ENCODE measurements at regions of chr12 and their contacts with region 1.

Region 1: GRCh38 chr12:70040141-70040540 is 203.1 kb upstream of the CNOT2 start:
- DNase-seq: no peak
- H3K4me3 ChIP-seq: no peak overlapping the region
- H3K27ac ChIP-seq: peak overlapping the region; percentile 45 to 66
- H3K4me1 ChIP-seq: peaks cover 0 to 7% of the 10 kb centered on the region in 2 donors
- H3K27me3 ChIP-seq: no peaks in the 10 kb centered on the region
- CTCF ChIP-seq: peak in 1 of 3 experiments; percentile 8

Region 2: GRCh38 chr12:69985656-69986055 is 54.5 kb before region 1 on chr12:
- intact Hi-C with region 1: loop called (anchors 5 kb)
- DNase-seq: no peak
- H3K4me3 ChIP-seq: no peak overlapping the region
- H3K27ac ChIP-seq: no peak overlapping the region
- H3K4me1 ChIP-seq: peaks cover 3 to 12% of the 10 kb centered on the region in 2 donors
- H3K27me3 ChIP-seq: no peaks in the 10 kb centered on the region
- CTCF ChIP-seq: no peak